ENCODE measurements at regions of chr11 and their contacts with region 1.

Region 1: GRCh38 chr11:66069715-66070603 is at the start of gene PACS1:
- DNase-seq: peak; percentile 80
- ATAC-seq: peak; percentile 63
- H3K4me3 Mint-ChIP-seq: peak within 1 kb of the TSS; percentile 81
- H3K27ac Mint-ChIP-seq: peak within 1 kb of the TSS; percentile 95
- H3K4me1 Mint-ChIP-seq: peaks cover 63% of the 10 kb centered on the region
- H3K27me3 Mint-ChIP-seq: no peaks in the 10 kb centered on the region
- CTCF ChIP-seq: no peak
- total RNA-seq, gene PACS1: 76.3 to 78.3 TPM

Region 2: DNA sequence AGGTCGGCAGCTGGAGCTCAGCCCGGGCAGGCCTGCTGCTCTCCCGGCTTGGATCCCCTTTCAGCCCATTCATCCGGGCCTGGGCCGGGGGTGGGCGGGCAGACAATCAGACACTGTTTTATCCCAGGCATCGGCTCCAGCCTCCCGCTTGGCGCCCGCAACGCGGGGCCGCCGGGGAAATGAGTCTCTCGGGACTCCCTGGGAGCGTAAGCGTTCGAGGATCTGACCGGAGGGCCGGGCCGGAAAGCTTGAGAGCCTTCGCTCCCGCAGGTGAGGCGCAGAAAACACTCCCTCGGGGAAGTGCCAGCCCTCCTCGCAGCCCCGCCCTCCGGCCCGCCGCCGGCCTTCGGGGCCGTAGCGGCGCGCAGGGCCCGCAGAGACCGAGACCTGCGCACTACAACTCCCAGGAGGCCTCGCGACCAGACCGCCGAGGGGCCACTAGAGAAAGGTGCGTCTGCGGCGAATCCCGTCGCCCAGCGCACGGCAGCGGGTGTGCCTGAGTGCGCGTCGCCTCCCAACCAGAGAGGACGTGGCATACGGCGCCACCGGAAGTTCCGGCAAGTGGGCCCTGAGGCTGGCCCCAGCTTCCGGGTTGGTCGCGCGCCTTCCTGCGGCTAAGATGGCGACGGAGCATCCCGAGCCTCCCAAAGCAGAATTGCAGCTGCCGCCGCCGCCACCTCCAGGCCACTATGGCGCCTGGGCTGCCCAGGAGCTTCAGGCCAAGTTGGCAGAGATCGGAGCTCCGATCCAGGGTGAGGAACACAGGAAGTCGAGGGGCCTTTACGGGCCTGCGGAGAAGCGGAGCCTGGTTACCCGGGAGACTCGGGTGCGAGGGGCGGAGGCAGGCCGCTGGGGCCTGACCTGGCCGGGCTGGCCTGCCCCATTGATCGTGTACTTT is 17.9 kb before region 1 on chr11 and contains the start of gene SF3B2:
- CTCF ChIA-PET with region 1: interaction called, 133 read pairs
- POLR2A ChIA-PET with region 1: interaction called, 131 read pairs
- intact Hi-C with region 1: no loop called
- DNase-seq: peak; percentile 98
- ATAC-seq: peak; percentile 99
- H3K4me3 Mint-ChIP-seq: peak within 1 kb of the TSS; percentile 94
- H3K27ac Mint-ChIP-seq: peak within 1 kb of the TSS; percentile 92
- H3K4me1 Mint-ChIP-seq: peaks cover 34% of the 10 kb centered on the region
- H3K27me3 Mint-ChIP-seq: peaks cover 7% of the 10 kb centered on the region
- CTCF ChIP-seq: no peak
- total RNA-seq, gene SF3B2: 255 to 278 TPM

Region 3: GRCh38 chr11:66100272-66101065 is 30.5 kb after region 1 on chr11:
- CTCF ChIA-PET with region 1: interaction called, 7 read pairs
- POLR2A ChIA-PET with region 1: interaction called, 10 read pairs
- intact Hi-C with region 1: no loop called
- DNase-seq: peak; percentile 82
- ATAC-seq: peak; percentile 93
- H3K4me3 Mint-ChIP-seq: peak overlapping the region; percentile 83
- H3K27ac Mint-ChIP-seq: peak overlapping the region; percentile 98
- H3K4me1 Mint-ChIP-seq: peaks cover 65% of the 10 kb centered on the region
- H3K27me3 Mint-ChIP-seq: no peaks in the 10 kb centered on the region
- CTCF ChIP-seq: no peak

Region 4: DNA sequence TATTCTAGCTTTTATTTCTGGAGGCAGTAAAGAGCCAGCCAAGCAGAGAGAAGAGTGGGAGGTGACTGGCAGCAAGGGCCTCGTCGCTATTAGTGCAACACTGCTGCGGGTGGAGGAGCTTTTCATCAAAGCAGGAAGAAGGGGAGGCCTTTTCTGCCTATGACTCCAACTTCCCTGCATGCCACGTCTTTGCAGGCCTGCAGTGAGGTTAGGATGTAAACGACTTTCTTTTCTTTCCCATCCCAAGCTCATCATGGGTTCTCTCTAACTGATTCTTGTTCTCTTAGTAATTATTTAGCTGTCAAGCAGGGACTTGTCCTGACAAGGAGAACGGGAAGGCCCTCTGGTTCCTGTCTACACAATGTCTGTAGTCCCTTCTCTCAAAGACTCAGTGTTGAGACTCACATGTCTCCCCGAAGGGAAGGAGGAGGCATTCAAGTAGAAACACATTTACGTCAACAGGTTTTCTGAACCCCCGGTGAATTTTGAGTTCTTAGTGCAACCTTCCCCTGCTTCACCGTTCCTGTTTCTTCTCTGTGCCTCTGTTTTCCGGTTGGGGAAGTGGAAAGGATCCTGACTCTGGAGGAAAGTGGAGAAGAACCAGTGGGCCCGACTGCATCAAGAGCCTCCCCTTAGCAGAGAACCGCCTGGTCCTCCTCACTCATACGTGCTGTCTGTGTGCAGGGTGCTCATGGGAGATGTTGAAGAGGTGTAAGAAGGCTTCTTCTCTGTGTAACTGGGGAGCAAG is 57.0 kb after region 1 on chr11:
- CTCF ChIA-PET with region 1: interaction called, 112 read pairs
- POLR2A ChIA-PET with region 1: interaction called, 10 read pairs
- intact Hi-C with region 1: loop called (anchors 2 kb)
- DNase-seq: peak; percentile 81
- ATAC-seq: peak; percentile 89
- H3K4me3 Mint-ChIP-seq: peak overlapping the region; percentile 72
- H3K27ac Mint-ChIP-seq: peak overlapping the region; percentile 96
- H3K4me1 Mint-ChIP-seq: peaks cover 76% of the 10 kb centered on the region
- H3K27me3 Mint-ChIP-seq: no peaks in the 10 kb centered on the region
- CTCF ChIP-seq: no peak

Region 5: GRCh38 chr11:66150140-66150539 is 80.2 kb after region 1 on chr11:
- CTCF ChIA-PET with region 1: interaction called, 11 read pairs
- POLR2A ChIA-PET with region 1: no interaction called
- intact Hi-C with region 1: no loop called
- DNase-seq: no peak
- ATAC-seq: no peak
- H3K4me3 Mint-ChIP-seq: no peak overlapping the region
- H3K27ac Mint-ChIP-seq: no peak overlapping the region
- H3K4me1 Mint-ChIP-seq: peaks cover 48% of the 10 kb centered on the region
- H3K27me3 Mint-ChIP-seq: no peaks in the 10 kb centered on the region
- CTCF ChIP-seq: no peak

Region 6: DNA sequence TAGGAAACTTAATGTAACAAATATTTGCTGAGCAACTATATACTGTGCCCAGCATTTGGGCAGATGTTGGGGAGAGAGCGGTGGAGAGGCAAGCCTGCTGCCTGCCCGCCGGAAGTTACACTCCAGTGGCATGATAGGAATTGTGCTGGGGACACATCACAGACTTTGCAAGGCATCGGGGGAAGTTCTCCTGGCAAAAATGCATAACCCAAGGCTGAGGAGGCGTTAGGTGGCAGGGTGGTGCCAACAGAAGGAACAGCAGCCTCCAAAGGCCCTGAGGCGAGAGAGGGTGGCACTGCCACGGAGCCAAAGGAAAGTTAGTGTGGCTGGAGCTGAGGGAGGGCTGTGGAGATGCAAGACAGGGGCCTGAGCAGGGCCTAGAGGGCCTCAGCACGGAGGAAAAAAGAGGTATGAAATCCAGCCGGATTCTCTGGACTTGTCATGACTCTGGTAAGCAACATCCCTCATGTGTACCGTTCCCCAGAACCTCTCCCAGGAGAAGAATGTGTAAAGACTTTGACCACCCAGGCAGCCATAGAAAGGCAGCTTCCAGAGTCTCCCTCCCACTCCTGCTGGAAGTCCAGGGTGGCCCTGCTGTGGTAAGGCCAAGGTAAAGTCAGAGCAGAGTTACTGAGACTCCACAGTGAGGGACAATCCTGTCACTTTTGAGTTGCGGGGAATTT is 122.4 kb after region 1 on chr11:
- CTCF ChIA-PET with region 1: no interaction called
- POLR2A ChIA-PET with region 1: no interaction called
- intact Hi-C with region 1: no loop called
- DNase-seq: no peak
- ATAC-seq: no peak
- H3K4me3 Mint-ChIP-seq: no peak overlapping the region
- H3K27ac Mint-ChIP-seq: no peak overlapping the region
- H3K4me1 Mint-ChIP-seq: peaks cover 16% of the 10 kb centered on the region
- H3K27me3 Mint-ChIP-seq: no peaks in the 10 kb centered on the region
- CTCF ChIP-seq: no peak

Region 7: GRCh38 chr11:66421492-66422205 is 351.7 kb after region 1 on chr11:
- CTCF ChIA-PET with region 1: no interaction called
- POLR2A ChIA-PET with region 1: no interaction called
- intact Hi-C with region 1: no loop called
- DNase-seq: peak; percentile 92
- ATAC-seq: peak; percentile 82
- H3K4me3 Mint-ChIP-seq: no peak overlapping the region
- H3K27ac Mint-ChIP-seq: no peak overlapping the region
- H3K4me1 Mint-ChIP-seq: peaks cover 28% of the 10 kb centered on the region
- H3K27me3 Mint-ChIP-seq: peaks cover 35% of the 10 kb centered on the region
- CTCF ChIP-seq: no peak

Measured in activated CD8-positive, alpha-beta T cell treated with anti-CD3 and anti-CD28 coated beads for 36 hours (primary cell).